Mammary epithelial cell (primary cell): ENCODE measurements at regions of chrX and their contacts with region 1.

Region 1: GRCh38 chrX:43121637-43122036 is 343.7 kb upstream of the PPP1R2C start:
- DNase-seq: peak; percentile 9
- H3K4me3 ChIP-seq: no peak overlapping the region
- H3K27ac ChIP-seq: no peak overlapping the region
- H3K4me1 ChIP-seq: no peaks in the 10 kb centered on the region
- H3K27me3 ChIP-seq: peaks cover 8% of the 10 kb centered on the region
- CTCF ChIP-seq: peak; percentile 12 to 50

Region 2: GRCh38 chrX:41796577-41796976 is 1325.1 kb before region 1 on chrX:
- CTCF ChIA-PET with region 1: no interaction called
- dilution Hi-C with region 1: no loop called
- in situ Hi-C with region 1: no loop called
- intact Hi-C with region 1: loop called (anchors 5 kb)
- DNase-seq: no peak
- H3K4me3 ChIP-seq: no peak overlapping the region
- H3K27ac ChIP-seq: no peak overlapping the region
- H3K4me1 ChIP-seq: no peaks in the 10 kb centered on the region
- H3K27me3 ChIP-seq: peaks cover 2% of the 10 kb centered on the region
- CTCF ChIP-seq: no peak

Region 3: GRCh38 chrX:42290608-42291007 is 831.0 kb before region 1 on chrX:
- CTCF ChIA-PET with region 1: no interaction called
- dilution Hi-C with region 1: no loop called
- in situ Hi-C with region 1: no loop called
- intact Hi-C with region 1: loop called (anchors 5 kb)
- DNase-seq: no peak
- H3K4me3 ChIP-seq: no peak overlapping the region
- H3K27ac ChIP-seq: no peak overlapping the region
- H3K4me1 ChIP-seq: no peaks in the 10 kb centered on the region
- H3K27me3 ChIP-seq: peaks cover 4% of the 10 kb centered on the region
- CTCF ChIP-seq: peak; percentile 18 to 48

Region 4: DNA sequence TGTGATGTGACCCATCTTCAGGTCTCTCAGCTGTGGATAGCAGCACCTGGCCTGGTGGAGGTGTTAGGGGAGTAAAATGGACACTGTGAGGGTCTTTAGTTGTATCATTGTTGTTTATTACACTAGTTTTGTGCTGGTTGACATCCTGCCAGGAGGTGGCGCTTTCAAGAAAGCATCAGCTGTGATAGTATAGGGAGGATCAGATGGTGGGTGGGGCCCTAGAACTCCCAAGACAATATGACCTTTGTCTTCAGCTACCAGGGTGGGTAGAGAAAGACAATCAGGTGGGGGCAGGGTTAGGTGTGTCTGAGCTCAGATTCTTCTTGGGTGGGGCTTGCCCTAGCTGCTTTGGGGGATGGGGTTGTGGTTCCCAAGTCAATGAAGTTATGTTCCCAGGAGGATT is 506.5 kb before region 1 on chrX:
- CTCF ChIA-PET with region 1: no interaction called
- dilution Hi-C with region 1: no loop called
- in situ Hi-C with region 1: no loop called
- intact Hi-C with region 1: loop called (anchors 10 kb)
- DNase-seq: peak; percentile 36
- H3K4me3 ChIP-seq: no peak overlapping the region
- H3K27ac ChIP-seq: no peak overlapping the region
- H3K4me1 ChIP-seq: no peaks in the 10 kb centered on the region
- H3K27me3 ChIP-seq: peaks cover 2% of the 10 kb centered on the region
- CTCF ChIP-seq: peak; percentile 25 to 31

Region 5: DNA sequence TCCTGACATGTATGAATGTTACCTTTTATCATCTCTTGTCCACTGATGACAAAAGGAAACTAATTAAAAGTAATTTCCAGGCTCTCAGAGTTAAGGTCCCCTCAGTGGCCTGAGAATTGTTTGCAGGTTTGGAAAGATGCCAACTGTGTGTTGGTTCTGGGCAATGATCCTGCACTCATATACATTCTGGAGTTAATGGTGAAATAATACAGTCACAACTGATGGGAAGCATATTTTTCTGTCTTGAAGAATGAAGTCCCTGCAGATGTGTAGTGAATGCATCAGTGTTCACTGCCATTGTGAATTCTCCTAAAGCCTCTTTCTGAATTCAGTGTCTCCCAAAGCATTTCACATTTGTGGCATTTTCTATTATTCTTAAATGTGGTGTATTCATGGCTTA is 105.6 kb before region 1 on chrX:
- CTCF ChIA-PET with region 1: no interaction called
- dilution Hi-C with region 1: no loop called
- in situ Hi-C with region 1: no loop called
- intact Hi-C with region 1: no loop called
- DNase-seq: no peak
- H3K4me3 ChIP-seq: no peak overlapping the region
- H3K27ac ChIP-seq: no peak overlapping the region
- H3K4me1 ChIP-seq: no peaks in the 10 kb centered on the region
- H3K27me3 ChIP-seq: no peaks in the 10 kb centered on the region
- CTCF ChIP-seq: no peak